ENCODE measurements at regions of chr12 and their contacts with region 1.

Region 1: GRCh38 chr12:21697904-21698630 is 40.4 kb upstream of the LDHB start:
- DNase-seq: no peak
- H3K4me3 ChIP-seq: peak overlapping the region in 48 of 59 donors; percentile 1 to 58 (median 36)
- H3K27ac ChIP-seq: no peak overlapping the region
- H3K27me3 ChIP-seq: no peaks in the 10 kb centered on the region
- CTCF ChIP-seq: peak; percentile 68 to 95 (median 80)

Region 2: DNA sequence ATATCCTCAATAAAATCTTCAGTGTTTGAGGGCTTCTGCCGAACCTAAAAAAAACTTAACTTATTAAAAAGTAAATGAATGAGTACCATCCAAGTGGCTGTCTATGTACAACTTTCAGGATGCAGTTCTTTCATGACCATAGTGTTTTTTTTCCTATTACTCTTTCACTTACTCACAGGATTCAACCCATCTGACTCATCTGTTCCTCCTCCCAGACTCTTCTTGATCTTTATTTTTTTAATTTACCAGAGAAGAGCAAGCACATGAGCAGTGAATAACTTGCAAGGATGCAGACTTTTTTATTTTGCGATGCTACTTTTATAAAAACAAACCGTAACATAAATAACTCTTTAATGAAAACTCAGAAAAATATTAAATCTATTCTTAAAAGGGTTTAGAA is 221.1 kb before region 1 on chr12:
- intact Hi-C with region 1: no loop called
- DNase-seq: no peak
- H3K4me3 ChIP-seq: no peak overlapping the region
- H3K27ac ChIP-seq: no peak overlapping the region
- H3K27me3 ChIP-seq: no peaks in the 10 kb centered on the region
- CTCF ChIP-seq: no peak

Region 3: DNA sequence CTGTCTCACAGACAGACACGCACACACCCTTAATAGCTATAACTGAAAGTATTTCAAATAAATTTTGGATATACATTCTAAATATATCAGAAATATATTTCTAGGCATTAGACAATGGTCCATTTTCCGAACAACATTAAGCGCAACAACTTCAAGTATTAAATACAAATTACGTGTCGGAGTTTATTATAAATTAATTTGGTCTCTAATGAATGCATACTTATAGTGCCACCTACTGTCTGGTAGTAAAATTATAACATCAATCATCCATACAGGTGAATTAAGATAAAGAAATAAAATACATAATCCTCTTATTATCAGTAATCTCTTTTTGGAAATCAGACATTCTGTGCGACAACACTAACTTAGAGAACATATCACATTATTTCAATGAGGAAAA is 320.8 kb after region 1 on chr12:
- intact Hi-C with region 1: loop called (anchors 5 to 10 kb)
- DNase-seq: no peak
- H3K4me3 ChIP-seq: no peak overlapping the region
- H3K27ac ChIP-seq: no peak overlapping the region
- H3K27me3 ChIP-seq: no peaks in the 10 kb centered on the region
- CTCF ChIP-seq: peak in 55 of 56 donors; percentile 39 to 76 (median 57)

Region 4: GRCh38 chr12:22443379-22444316 is 745.6 kb after region 1 on chr12:
- intact Hi-C with region 1: loop called in 1 of 2 experiments (anchors 10 kb)
- DNase-seq: peak in 9 of 10 donors; percentile 43 to 69 (median 52)
- H3K4me3 ChIP-seq: no peak overlapping the region
- H3K27ac ChIP-seq: no peak overlapping the region
- H3K27me3 ChIP-seq: no peaks in the 10 kb centered on the region
- CTCF ChIP-seq: peak; percentile 30 to 85 (median 70)

Measured in dorsolateral prefrontal cortex (tissue), 120 donors.